Vagina (tissue), 2 donors: ENCODE measurements at regions of chr12 and their contacts with region 1.

Region 1: GRCh38 chr12:57836442-57837375 is 9.8 kb downstream of the CTDSP2 start:
- DNase-seq: no peak
- H3K4me3 ChIP-seq: peak overlapping the region; percentile 16 to 36
- H3K27ac ChIP-seq: peak overlapping the region; percentile 34
- H3K4me1 ChIP-seq: peaks cover 100% of the 10 kb centered on the region
- H3K27me3 ChIP-seq: no peaks in the 10 kb centered on the region
- CTCF ChIP-seq: no peak
- POLR2A ChIP-seq: no peak

Region 2: DNA sequence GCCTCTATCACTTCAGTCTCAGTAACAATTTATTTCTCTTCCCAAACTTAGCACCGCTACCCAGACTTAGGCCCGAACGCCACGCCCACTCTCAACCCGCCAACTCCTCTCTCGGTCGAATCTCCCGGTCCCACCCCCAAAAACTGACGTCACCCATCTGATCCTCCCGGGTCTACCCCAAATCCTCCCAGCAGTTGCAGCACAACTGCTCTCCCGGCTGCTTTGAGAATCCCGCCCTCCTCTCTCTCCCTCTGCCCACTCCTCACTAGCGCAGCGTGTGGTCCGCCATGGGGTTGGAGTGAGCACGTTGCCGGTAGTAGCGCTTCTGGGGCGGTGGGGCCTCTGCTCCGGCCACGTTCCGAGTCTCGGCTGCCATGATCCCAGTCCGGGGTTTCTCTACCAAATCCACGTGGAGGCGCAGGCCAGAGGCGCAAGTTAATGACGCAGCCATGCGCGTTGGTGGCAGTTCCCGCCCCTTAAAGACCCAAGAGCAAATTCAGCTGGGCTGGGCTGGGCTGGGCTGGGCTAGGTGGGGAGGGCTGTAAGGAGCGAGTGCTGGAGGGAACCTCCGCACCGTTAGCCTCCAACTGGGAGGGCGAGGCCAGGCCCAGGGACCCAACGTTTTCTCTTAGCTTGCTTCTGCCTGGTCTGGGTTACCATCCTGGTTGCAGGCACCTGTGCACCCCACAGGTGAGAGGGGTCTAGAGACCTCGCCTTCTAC is 64.8 kb before region 1 on chr12 and contains the start of gene METTL1:
- intact Hi-C with region 1: loop called (anchors 10 kb)
- DNase-seq: peak in 1 of 2 donors; percentile 97
- H3K4me3 ChIP-seq: peak within 1 kb of the TSS; percentile 81 to 96
- H3K27ac ChIP-seq: peak within 1 kb of the TSS; percentile 88
- H3K4me1 ChIP-seq: peaks cover 25% of the 10 kb centered on the region
- H3K27me3 ChIP-seq: no peaks in the 10 kb centered on the region
- CTCF ChIP-seq: peak in 2 of 3 experiments; percentile 4 to 19
- POLR2A ChIP-seq: no peak
- total RNA-seq, gene METTL1: 10.8 TPM

Region 3: DNA sequence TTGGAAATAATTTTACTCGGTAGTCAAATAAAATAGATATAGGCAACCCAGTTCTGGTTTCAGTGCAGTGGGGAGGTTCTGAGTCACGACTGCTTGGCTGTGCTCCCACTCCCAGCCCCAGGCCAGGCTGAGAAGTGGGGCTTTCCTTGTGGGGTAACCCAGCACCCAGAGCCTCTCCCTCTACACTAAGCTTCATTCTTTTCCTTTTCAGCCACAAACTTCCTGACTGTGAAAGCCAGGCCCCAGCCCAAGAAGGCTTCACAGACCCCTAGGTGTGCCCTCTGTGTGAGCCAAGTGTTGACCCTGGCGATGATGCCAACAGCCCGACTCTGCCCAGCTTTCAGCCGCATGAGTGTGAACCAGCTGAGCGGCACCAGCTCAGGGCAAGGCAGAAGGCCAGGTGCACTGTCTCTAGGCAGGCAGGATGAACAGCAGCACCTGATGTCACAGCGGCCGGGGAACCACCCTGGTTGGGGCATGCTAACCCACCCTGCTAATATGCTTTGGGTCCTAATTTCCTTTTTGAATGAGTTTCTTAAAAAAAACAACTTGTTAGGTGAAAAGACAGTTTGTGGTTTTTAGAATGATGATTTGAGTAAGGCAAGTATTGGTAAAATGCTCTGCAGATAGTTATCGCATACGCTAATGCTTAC is 62.4 kb after region 1 on chr12:
- intact Hi-C with region 1: loop called (anchors 5 kb)
- DNase-seq: no peak
- H3K4me3 ChIP-seq: no peak overlapping the region
- H3K27ac ChIP-seq: peak overlapping the region; percentile 97
- H3K4me1 ChIP-seq: peaks cover 57% of the 10 kb centered on the region
- H3K27me3 ChIP-seq: no peaks in the 10 kb centered on the region
- CTCF ChIP-seq: no peak
- POLR2A ChIP-seq: no peak

Region 4: GRCh38 chr12:58364389-58365086 is 527.8 kb after region 1 on chr12:
- intact Hi-C with region 1: no loop called
- DNase-seq: no peak
- H3K4me3 ChIP-seq: no peak overlapping the region
- H3K27ac ChIP-seq: no peak overlapping the region
- H3K4me1 ChIP-seq: peaks cover 10% of the 10 kb centered on the region
- H3K27me3 ChIP-seq: no peaks in the 10 kb centered on the region
- CTCF ChIP-seq: no peak
- POLR2A ChIP-seq: no peak